Head of caudate nucleus (tissue), 42 donors: ENCODE measurements at regions of chr12 and their contacts with region 1.

Region 1: GRCh38 chr12:7018350-7019042 is at the start of gene LPCAT3:
- DNase-seq: peak; percentile 95 to 99 (median 98)

Region 2: GRCh38 chr12:6970089-6970527 is 48.4 kb before region 1 on chr12:
- intact Hi-C with region 1: loop called (anchors 5 kb)
- DNase-seq: peak in 5 of 42 donors; percentile 23 to 54 (median 33)

Region 3: GRCh38 chr12:7092229-7092985 is 73.9 kb after region 1 on chr12 and contains the start of gene C1R:
- intact Hi-C with region 1: loop called (anchors 10 kb)
- DNase-seq: peak; percentile 35 to 87 (median 68)

Region 4: DNA sequence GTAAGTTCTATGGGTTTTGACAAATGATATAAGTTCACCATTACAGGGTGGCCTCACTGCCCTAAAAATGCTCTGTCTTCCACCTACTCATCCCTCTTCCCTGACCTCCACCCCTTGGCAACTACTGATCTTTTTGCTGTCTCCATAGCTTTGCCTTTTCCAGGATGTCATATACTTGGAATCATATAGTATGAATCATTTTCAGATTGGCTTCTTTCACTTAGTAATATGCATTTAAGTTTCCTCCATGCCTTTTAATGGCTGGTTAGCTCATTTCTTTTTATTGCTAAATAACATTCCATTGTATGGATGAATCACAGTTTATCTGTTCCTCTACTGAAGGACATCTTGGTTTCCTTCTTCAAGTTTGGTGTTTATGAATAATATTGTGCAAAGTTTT is 157.0 kb after region 1 on chr12:
- intact Hi-C with region 1: no loop called
- DNase-seq: no peak